Left ventricle myocardium inferior (tissue), 1 donor: ENCODE measurements at regions of chr9 and their contacts with region 1.

Region 1: GRCh38 chr9:109520478-109521132 is 22.5 kb upstream of the PTPN3 start:
- DNase-seq: peak; percentile 24
- H3K4me3 ChIP-seq: no peak overlapping the region
- H3K27ac ChIP-seq: no peak overlapping the region
- H3K4me1 ChIP-seq: no peaks in the 10 kb centered on the region
- H3K27me3 ChIP-seq: no peaks in the 10 kb centered on the region
- CTCF ChIP-seq: peak; percentile 92

Region 2: DNA sequence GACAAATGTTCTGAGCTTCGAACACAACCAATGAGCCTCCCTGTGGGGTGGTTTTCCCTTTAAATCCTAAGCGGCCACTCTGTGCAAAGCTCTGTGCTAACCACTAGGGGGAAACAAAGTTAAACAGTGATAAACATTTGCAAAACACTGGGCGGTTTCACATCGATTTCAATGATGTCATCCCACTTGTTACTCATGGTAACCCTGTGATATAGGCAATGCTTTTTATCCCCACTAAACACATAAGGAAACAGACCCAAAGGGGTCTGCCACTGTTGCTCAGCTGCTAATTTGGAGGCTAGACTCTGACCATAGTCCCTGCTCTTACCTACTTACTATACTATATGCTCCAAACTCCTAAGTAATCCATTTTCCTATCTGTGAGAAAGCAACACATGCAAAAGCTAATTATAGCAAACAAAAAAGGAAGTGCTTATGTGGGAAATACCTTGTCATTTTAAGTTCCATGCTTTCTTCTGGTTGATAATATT is 79.8 kb before region 1 on chr9:
- intact Hi-C with region 1: loop called (anchors 10 kb)
- DNase-seq: no peak
- H3K4me3 ChIP-seq: no peak overlapping the region
- H3K27ac ChIP-seq: no peak overlapping the region
- H3K4me1 ChIP-seq: peaks cover 34% of the 10 kb centered on the region
- H3K27me3 ChIP-seq: peaks cover under 1% of the 10 kb centered on the region
- CTCF ChIP-seq: peak; percentile 79

Region 3: GRCh38 chr9:109499631-109500410 is 20.8 kb before region 1 on chr9:
- intact Hi-C with region 1: no loop called
- DNase-seq: peak; percentile 61
- H3K4me3 ChIP-seq: peak overlapping the region; percentile 66
- H3K27ac ChIP-seq: no peak overlapping the region
- H3K4me1 ChIP-seq: peaks cover 21% of the 10 kb centered on the region
- H3K27me3 ChIP-seq: peaks cover 57% of the 10 kb centered on the region
- CTCF ChIP-seq: no peak